ENCODE measurements at regions of chr15 and their contacts with region 1.

Region 1: DNA sequence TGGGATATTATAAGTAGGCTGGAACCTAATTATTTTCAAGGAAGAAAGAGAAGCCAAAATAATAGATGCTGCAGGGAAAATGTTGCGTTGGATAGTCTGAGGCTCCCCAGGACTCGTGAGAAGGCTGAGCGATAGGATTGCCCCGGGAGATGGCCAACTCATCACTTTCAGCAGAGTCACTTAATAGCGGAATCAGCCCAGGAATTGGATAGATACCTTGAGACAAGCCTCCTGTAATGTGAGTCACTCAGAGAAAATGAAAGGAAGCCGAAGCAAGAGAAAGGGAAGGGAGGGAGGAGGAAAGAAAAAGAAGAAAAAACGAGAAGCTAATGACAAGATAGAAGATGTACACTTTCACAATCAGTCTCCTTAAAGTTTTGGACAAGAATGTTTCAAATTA is 94.3 kb downstream of the SQOR start:
- DNase-seq: no peak
- H3K4me3 ChIP-seq: no peak overlapping the region
- H3K27me3 ChIP-seq: no peaks in the 10 kb centered on the region
- CTCF ChIP-seq: no peak

Region 2: DNA sequence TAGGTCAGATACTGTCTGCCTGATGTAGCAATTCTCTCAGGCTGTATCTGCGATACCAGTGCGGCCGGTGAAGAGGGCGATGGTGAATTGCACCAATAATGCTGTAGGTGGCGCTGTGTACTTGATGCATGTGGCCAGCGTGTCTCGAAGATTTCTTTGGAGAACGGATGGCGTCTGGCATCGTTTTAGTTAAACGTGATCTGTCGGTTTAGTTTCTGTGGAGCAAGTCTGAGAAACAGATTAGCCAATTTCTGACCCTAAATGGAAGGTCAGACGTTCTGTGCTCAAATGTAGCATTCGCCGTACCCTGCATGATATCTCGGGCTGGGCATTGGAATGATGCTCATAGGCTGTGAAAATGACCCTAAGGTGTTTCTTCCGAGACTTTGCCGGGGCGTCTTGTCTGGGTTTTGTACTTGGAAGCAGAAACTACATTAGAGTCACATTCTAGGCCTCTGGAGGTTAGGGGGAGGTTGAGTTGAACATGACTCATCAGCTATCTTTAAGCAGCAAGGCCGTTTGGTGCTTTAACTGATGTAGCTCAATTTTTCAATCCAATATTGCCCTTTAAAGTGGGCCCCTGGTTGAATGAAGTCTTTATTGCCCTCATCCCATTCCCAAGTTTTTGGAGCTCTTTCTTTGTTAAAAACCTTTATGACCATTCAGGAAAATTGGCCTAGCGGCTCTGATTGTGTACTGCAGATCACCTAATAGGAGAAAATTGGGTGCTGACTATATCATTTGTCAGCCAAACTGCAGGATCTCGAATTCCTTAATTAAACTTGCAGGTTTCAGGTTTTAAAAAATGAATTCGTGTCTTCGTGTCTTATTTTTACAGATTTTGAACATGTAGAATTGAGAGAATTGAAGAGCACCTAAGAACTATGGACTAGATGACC is 14.3 kb before region 1 on chr15:
- CTCF ChIA-PET with region 1: interaction called, 13 read pairs
- POLR2A ChIA-PET with region 1: no interaction called
- DNase-seq: peak; percentile 11
- H3K4me3 ChIP-seq: no peak overlapping the region
- H3K27me3 ChIP-seq: no peaks in the 10 kb centered on the region
- CTCF ChIP-seq: peak; percentile 85

Region 3: DNA sequence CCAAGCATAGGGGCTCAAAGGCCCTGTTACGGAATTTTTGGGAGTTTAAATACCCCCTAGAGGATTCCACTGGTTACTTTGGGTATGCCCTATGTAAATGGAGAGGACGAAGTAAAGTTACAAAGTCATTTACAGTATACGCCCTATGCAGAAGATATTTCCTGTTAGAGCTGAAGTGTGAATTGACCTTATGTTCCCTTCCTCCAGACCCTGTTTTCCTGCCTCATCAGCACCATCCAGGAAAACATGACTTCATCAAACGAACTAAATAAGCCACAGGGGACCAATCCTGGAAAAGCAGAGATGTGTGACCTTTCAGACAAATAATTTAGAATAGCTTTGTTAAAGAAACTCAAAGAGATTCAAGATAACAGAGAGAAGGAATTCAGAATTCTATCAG is 83.1 kb after region 1 on chr15:
- CTCF ChIA-PET with region 1: no interaction called
- POLR2A ChIA-PET with region 1: no interaction called
- DNase-seq: no peak
- H3K4me3 ChIP-seq: no peak overlapping the region
- H3K27me3 ChIP-seq: no peaks in the 10 kb centered on the region
- CTCF ChIP-seq: no peak

Measured in BJ (cell line).